ENCODE measurements at regions of chr18 and their contacts with region 1.

Region 1: DNA sequence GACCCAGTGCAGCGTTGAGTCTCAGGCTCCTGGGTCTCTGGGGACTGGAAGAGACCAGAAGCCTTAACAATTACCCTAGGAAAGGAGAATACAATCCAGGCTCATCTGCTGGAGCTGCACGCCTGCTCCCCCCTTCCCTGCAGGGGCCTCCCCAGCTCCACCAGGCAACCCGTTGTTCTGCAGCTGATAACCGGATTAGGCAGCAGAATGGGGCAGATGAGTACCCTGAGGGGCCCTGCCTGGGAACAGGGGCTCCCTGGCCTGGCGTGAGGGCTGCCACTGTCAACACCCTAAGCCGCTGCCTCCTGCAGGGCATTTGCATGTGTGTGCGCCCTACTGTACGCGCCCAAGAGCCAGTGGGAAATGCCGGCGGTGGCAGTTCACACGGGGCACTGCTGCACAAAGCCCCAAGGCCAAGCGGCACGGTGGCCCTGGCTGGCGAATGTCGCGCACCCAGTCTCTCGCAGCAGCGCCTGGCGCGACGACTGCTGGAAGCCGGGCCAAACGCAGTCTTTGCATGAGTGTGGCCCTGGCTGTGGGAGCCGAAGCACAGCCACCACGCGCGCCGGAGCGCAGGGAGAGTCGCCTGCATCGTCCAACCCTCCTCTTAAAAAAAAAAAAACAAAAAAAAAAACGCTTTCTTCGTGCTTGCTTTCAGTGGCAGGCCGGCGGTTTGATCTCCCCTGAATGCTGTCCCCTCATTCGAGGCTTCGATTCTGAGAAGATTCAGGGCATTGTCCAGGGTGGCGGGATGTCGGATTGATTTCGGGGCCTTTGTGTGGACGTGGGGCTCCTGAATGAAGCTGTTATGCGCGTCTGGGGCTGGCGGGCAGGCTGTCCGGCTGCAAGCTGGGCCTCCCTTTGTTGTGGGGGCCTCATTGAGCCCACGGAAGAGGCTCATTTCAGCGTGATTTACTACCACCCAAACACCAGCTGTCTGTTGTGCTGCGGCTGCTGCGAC is 63.8 kb downstream of the SETBP1 start:
- DNase-seq: no peak
- H3K4me3 Mint-ChIP-seq: no peak overlapping the region
- H3K27ac Mint-ChIP-seq: no peak overlapping the region
- H3K4me1 Mint-ChIP-seq: no peaks in the 10 kb centered on the region
- H3K27me3 Mint-ChIP-seq: no peaks in the 10 kb centered on the region
- CTCF ChIP-seq: no peak

Region 2: DNA sequence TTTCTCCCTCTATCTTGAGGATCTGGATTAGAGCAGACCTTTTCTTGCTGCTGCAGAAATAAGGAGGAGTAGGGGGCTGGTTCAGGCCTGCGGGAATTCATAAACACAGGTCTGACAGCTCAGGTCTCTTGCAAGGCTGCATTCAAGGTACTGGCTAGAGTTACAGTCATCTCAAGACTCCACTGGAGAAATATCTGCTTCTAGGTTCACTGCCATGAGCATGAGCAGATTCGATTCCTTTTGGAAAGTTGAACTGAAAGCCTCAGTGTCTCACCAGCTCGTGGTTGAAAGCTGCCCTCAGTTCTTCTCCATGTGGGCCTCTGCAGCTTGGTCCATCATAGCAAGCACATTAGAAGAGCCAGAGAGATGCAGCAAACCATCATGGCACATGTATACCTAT is 188.1 kb before region 1 on chr18:
- CTCF ChIA-PET with region 1: interaction called, 3 read pairs
- intact Hi-C with region 1: loop called (anchors 5 kb)
- DNase-seq: no peak
- H3K4me3 Mint-ChIP-seq: no peak overlapping the region
- H3K27ac Mint-ChIP-seq: no peak overlapping the region
- H3K4me1 Mint-ChIP-seq: no peaks in the 10 kb centered on the region
- H3K27me3 Mint-ChIP-seq: no peaks in the 10 kb centered on the region
- CTCF ChIP-seq: no peak